Mammary epithelial cell (primary cell): ENCODE measurements at regions of chrX and their contacts with region 1.

Region 1: GRCh38 chrX:132769609-132770008 is 188.8 kb downstream of the HS6ST2 start:
- DNase-seq: no peak
- H3K4me3 ChIP-seq: no peak overlapping the region
- H3K27ac ChIP-seq: no peak overlapping the region
- H3K4me1 ChIP-seq: no peaks in the 10 kb centered on the region
- H3K27me3 ChIP-seq: no peaks in the 10 kb centered on the region
- CTCF ChIP-seq: no peak

Region 2: DNA sequence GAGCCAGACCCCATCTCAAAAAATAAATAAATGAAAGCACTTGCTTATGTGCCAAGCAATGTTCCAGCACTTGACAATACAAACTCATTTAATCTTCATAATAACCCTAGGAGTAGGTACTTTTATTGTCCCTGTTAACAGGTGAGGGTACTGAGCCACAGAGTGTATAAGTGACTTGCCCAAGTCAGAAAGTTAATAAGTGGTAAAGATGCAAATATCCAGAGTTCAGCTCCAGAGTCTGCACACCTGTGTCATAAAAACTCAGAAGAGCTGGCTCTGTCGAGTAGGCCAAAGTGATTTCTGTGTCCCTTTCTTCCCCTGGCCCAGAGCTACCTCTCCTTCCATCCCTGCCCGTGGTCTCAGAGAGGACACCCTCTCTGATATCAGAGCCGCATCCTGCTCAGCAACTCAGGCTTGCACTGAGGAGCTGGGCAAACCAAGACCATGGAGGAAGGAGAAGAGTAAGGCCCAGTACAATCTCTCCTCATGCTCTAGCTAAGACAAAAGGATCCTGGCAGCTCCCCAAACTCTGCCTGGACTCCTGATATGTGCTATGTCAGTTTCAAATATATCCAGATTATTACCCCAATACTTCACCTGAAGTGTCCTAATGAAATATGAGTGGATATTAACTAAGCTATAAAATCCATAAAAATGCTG is 52.5 kb after region 1 on chrX:
- CTCF ChIA-PET with region 1: no interaction called
- dilution Hi-C with region 1: no loop called
- in situ Hi-C with region 1: no loop called
- intact Hi-C with region 1: loop called (anchors 2 kb)
- DNase-seq: no peak
- H3K4me3 ChIP-seq: no peak overlapping the region
- H3K27ac ChIP-seq: no peak overlapping the region
- H3K4me1 ChIP-seq: no peaks in the 10 kb centered on the region
- H3K27me3 ChIP-seq: no peaks in the 10 kb centered on the region
- CTCF ChIP-seq: no peak

Region 3: GRCh38 chrX:132968296-132968949 is 198.8 kb after region 1 on chrX:
- CTCF ChIA-PET with region 1: no interaction called
- dilution Hi-C with region 1: no loop called
- in situ Hi-C with region 1: no loop called
- intact Hi-C with region 1: no loop called
- DNase-seq: no peak
- H3K4me3 ChIP-seq: no peak overlapping the region
- H3K27ac ChIP-seq: no peak overlapping the region
- H3K4me1 ChIP-seq: no peaks in the 10 kb centered on the region
- H3K27me3 ChIP-seq: peaks cover 9% of the 10 kb centered on the region
- CTCF ChIP-seq: no peak